CD8-positive, alpha-beta T cell (primary cell): ENCODE measurements at regions of chr9 and their contacts with region 1.

Region 1: DNA sequence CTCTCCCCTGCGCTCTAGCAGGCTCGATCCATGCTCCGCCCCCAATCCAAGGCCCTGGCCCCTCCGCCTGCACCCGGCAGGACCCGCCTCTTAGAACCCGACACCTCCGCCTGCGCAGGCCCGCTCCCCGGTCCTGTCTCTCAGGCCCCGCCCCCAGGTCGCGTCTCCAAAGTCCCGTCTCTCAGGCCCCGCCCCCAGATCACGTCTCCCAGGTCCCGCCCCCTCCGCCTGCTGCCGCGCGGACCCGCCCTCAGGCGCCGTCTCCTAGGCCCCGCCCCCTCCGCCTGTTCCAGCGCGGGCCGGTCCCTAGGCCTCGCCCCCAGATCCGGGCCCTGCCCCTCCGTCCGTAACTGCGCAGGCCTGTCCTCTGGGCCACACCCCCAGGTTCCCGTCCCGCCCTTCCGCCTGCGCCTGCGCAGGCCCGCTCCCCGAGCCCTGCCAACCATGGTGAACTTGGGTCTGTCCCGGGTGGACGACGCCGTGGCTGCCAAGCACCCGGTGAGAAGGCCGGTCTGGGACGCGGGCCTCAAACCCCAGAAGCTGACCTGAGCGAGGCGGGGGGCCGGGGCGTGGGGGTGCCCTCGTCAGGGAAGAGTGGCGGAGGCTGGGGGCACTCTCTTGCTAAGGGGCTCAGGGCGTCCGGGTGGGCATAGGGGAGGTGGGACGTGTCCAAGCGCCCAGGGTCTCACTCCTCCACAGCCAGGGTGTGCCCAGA is at the start of gene TMEM141:
- DNase-seq: peak; percentile 99 to 100 (median 100)
- ATAC-seq: peak; percentile 85
- H3K4me3 ChIP-seq: peak within 1 kb of the TSS; percentile 73 to 74
- H3K4me3 Mint-ChIP-seq: peak within 1 kb of the TSS; percentile 85
- H3K27ac ChIP-seq: peak within 1 kb of the TSS; percentile 88 to 94
- H3K27ac Mint-ChIP-seq: peak within 1 kb of the TSS; percentile 97
- H3K4me1 ChIP-seq: peaks cover 32% of the 10 kb centered on the region
- H3K4me1 Mint-ChIP-seq: peaks cover 29% of the 10 kb centered on the region
- H3K27me3 ChIP-seq: no peaks in the 10 kb centered on the region
- H3K27me3 Mint-ChIP-seq: no peaks in the 10 kb centered on the region
- CTCF ChIP-seq: no peak
- total RNA-seq, gene TMEM141: 14.5 to 16.6 TPM

Region 2: GRCh38 chr9:136545966-136546698 is 245.0 kb before region 1 on chr9 and contains the start of gene NOTCH1:
- CTCF ChIA-PET with region 1: no interaction called
- POLR2A ChIA-PET with region 1: no interaction called
- intact Hi-C with region 1: loop called (anchors 5 to 10 kb)
- DNase-seq: peak; percentile 75 to 91 (median 83)
- ATAC-seq: peak; percentile 78
- H3K4me3 ChIP-seq: peak within 1 kb of the TSS; percentile 82 to 90
- H3K4me3 Mint-ChIP-seq: peak within 1 kb of the TSS; percentile 85
- H3K27ac ChIP-seq: peak within 1 kb of the TSS; percentile 50 to 55
- H3K27ac Mint-ChIP-seq: peak within 1 kb of the TSS; percentile 85
- H3K4me1 ChIP-seq: peaks cover 31% of the 10 kb centered on the region
- H3K4me1 Mint-ChIP-seq: peaks cover 27% of the 10 kb centered on the region
- H3K27me3 ChIP-seq: no peaks in the 10 kb centered on the region
- H3K27me3 Mint-ChIP-seq: no peaks in the 10 kb centered on the region
- CTCF ChIP-seq: no peak
- total RNA-seq, gene NOTCH1: 29.0 to 30.0 TPM

Region 3: GRCh38 chr9:136849038-136849959 is 58.2 kb after region 1 on chr9 and contains the start of gene PHPT1:
- CTCF ChIA-PET with region 1: interaction called, 4 read pairs
- POLR2A ChIA-PET with region 1: no interaction called
- intact Hi-C with region 1: loop called (anchors 1 kb)
- DNase-seq: peak; percentile 91 to 98 (median 96)
- ATAC-seq: peak; percentile 92
- H3K4me3 ChIP-seq: peak within 1 kb of the TSS; percentile 77 to 99
- H3K4me3 Mint-ChIP-seq: peak within 1 kb of the TSS; percentile 93
- H3K27ac ChIP-seq: peak within 1 kb of the TSS; percentile 47 to 68
- H3K27ac Mint-ChIP-seq: peak within 1 kb of the TSS; percentile 88
- H3K4me1 ChIP-seq: peaks cover 29% of the 10 kb centered on the region
- H3K4me1 Mint-ChIP-seq: peaks cover 15% of the 10 kb centered on the region
- H3K27me3 ChIP-seq: peaks cover 3 to 11% of the 10 kb centered on the region in 2 experiments
- H3K27me3 Mint-ChIP-seq: peaks cover 9% of the 10 kb centered on the region
- CTCF ChIP-seq: no peak
- total RNA-seq, gene PHPT1: 15.7 to 17.1 TPM

Region 4: GRCh38 chr9:136978073-136978864 is 187.2 kb after region 1 on chr9:
- CTCF ChIA-PET with region 1: no interaction called
- POLR2A ChIA-PET with region 1: no interaction called
- intact Hi-C with region 1: loop called in 1 of 2 experiments (anchors 1 kb)
- DNase-seq: peak; percentile 47 to 87 (median 73)
- ATAC-seq: peak; percentile 81
- H3K4me3 ChIP-seq: peak overlapping the region; percentile 26 to 55
- H3K4me3 Mint-ChIP-seq: peak overlapping the region; percentile 51
- H3K27ac ChIP-seq: no peak overlapping the region
- H3K27ac Mint-ChIP-seq: no peak overlapping the region
- H3K4me1 ChIP-seq: peaks cover 37% of the 10 kb centered on the region
- H3K4me1 Mint-ChIP-seq: peaks cover 21% of the 10 kb centered on the region
- H3K27me3 ChIP-seq: no peaks in the 10 kb centered on the region
- H3K27me3 Mint-ChIP-seq: no peaks in the 10 kb centered on the region
- CTCF ChIP-seq: no peak

Region 5: DNA sequence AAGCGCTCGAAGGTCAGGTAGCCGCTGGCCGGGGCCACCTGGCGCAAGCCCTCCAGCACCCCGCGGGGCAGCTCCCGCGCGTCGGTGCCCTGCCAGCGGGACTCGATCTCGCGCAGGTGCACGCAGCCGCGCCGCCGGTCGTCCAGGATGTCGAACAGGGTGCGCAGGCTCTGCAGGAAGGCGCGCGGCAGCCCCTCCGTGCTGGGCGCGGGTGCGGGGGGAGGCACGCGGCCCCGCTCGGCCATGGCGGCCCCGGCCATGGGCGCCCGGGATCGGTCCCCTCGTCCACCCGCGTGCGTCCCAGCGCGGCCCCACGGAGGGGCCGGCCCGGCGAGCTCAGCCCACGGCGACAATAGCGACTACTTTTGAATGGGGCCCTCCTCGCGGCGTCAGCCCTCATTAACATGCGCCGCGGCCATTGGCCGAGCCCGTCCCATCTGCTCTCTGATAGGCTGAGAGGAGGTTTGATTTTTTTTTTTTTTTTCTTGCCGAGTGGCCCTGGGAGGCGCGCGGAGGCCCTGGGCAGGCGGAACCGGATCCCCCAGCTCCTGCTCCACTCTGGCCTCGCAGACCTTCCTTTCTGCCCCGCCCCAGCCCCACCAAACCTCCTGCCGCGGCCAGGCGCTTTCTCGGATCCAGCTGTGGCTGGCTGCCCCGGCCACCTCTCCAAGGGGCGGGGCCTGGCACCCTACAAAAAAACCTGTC is 279.3 kb after region 1 on chr9 and contains the start of gene SAPCD2:
- CTCF ChIA-PET with region 1: interaction called, 27 read pairs
- POLR2A ChIA-PET with region 1: no interaction called
- intact Hi-C with region 1: loop called in 1 of 2 experiments (anchors 1 kb)
- DNase-seq: peak; percentile 66 to 94 (median 82)
- ATAC-seq: peak; percentile 87
- H3K4me3 ChIP-seq: peak within 1 kb of the TSS; percentile 46 to 50
- H3K4me3 Mint-ChIP-seq: peak within 1 kb of the TSS; percentile 70
- H3K27ac ChIP-seq: peak within 1 kb of the TSS in 1 of 2 experiments; percentile 30
- H3K27ac Mint-ChIP-seq: no peak within 1 kb of the TSS
- H3K4me1 ChIP-seq: peaks cover 14% of the 10 kb centered on the region
- H3K4me1 Mint-ChIP-seq: peaks cover 14% of the 10 kb centered on the region
- H3K27me3 ChIP-seq: peaks cover 0 to 9% of the 10 kb centered on the region in 2 experiments
- H3K27me3 Mint-ChIP-seq: no peaks in the 10 kb centered on the region
- CTCF ChIP-seq: no peak
- total RNA-seq, gene SAPCD2: 0.38 to 0.47 TPM

Region 6: DNA sequence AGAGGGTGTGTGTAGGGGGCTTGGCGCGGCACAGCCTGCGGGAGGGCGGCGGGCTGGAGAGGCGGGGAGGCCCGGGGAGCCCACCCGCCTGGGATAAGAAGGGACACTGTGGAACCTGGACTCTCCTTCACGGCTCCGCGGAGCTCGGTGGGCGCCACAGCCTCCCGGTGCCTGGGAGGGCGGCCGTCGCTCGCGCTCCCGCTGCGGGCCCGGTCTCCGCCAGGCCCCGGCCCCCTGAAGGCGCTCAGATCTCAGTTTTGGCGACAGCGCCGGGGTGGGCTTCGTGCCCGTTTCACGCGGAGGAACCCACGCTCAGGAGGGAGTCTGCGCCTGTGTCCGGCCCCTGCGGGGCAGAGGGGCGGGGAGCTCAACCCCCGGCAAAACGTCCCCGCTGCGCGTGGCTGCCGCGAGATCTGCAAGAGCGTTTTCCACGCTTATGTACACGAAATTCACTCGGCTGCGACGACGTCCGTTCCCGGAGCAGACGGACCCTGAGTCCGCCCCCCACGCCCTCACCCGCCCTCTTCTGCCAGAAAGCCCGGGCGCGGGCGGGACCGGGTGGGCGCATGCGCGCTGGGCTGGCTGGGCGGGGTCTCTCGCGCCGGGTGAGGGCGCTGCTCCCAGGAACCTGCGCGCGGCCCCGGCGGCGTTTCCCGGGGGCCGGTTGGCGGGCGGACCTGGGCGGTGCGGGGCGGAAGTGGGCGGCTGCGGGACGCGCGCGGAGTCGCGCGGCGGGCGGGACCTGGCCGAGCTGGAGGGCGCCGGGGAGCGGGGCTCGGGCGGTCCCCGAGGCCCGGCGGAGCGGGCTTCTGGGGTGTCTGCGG is 463.8 kb after region 1 on chr9 and contains the start of gene NELFB:
- CTCF ChIA-PET with region 1: no interaction called
- POLR2A ChIA-PET with region 1: no interaction called
- intact Hi-C with region 1: loop called in 1 of 2 experiments (anchors 1 kb)
- DNase-seq: peak; percentile 91 to 99 (median 95)
- ATAC-seq: peak; percentile 92
- H3K4me3 ChIP-seq: peak within 1 kb of the TSS; percentile 81 to 83
- H3K4me3 Mint-ChIP-seq: peak within 1 kb of the TSS; percentile 88
- H3K27ac ChIP-seq: peak within 1 kb of the TSS; percentile 12 to 38
- H3K27ac Mint-ChIP-seq: peak within 1 kb of the TSS; percentile 73
- H3K4me1 ChIP-seq: peaks cover 18% of the 10 kb centered on the region
- H3K4me1 Mint-ChIP-seq: peaks cover 15% of the 10 kb centered on the region
- H3K27me3 ChIP-seq: no peaks in the 10 kb centered on the region
- H3K27me3 Mint-ChIP-seq: no peaks in the 10 kb centered on the region
- CTCF ChIP-seq: no peak
- total RNA-seq, gene NELFB: 17.1 to 17.6 TPM